Activated T-helper 2 cell treated with anti-CD3 and anti-CD28 coated beads, Interferon-gamma antibody, Interleukin-2, Interleukin-4, amounts not matched to agents 10 μg/mL and 5 μg/mL and 100 μg/mL, durations not matched to agents 14 hours and 24 hours and 36 hours (primary cell): ENCODE measurements at regions of chr10 and their contacts with region 1.

Region 1: GRCh38 chr10:77926566-77927401 is at the start of gene DLG5:
- DNase-seq: peak; percentile 25
- H3K4me3 Mint-ChIP-seq: peak within 1 kb of the TSS; percentile 73
- H3K27ac Mint-ChIP-seq: no peak within 1 kb of the TSS
- H3K4me1 Mint-ChIP-seq: peaks cover 10% of the 10 kb centered on the region
- H3K27me3 Mint-ChIP-seq: peaks cover 39% of the 10 kb centered on the region
- total RNA-seq, gene DLG5: 6.7 and 7.8 TPM in 2 replicates

Region 2: GRCh38 chr10:77846718-77847630 is 79.8 kb before region 1 on chr10:
- intact Hi-C with region 1: loop called (anchors 5 kb)
- DNase-seq: peak; percentile 45
- H3K4me3 Mint-ChIP-seq: no peak overlapping the region
- H3K27ac Mint-ChIP-seq: no peak overlapping the region
- H3K4me1 Mint-ChIP-seq: peaks cover 6% of the 10 kb centered on the region
- H3K27me3 Mint-ChIP-seq: no peaks in the 10 kb centered on the region

Region 3: GRCh38 chr10:77873536-77874380 is 53.0 kb before region 1 on chr10:
- intact Hi-C with region 1: loop called (anchors 10 kb)
- DNase-seq: peak; percentile 30
- H3K4me3 Mint-ChIP-seq: peak overlapping the region; percentile 8
- H3K27ac Mint-ChIP-seq: peak overlapping the region; percentile 77
- H3K4me1 Mint-ChIP-seq: peaks cover 17% of the 10 kb centered on the region
- H3K27me3 Mint-ChIP-seq: no peaks in the 10 kb centered on the region

Region 4: GRCh38 chr10:77965294-77965693 is 38.5 kb after region 1 on chr10:
- intact Hi-C with region 1: no loop called
- DNase-seq: no peak
- H3K4me3 Mint-ChIP-seq: no peak overlapping the region
- H3K27ac Mint-ChIP-seq: no peak overlapping the region
- H3K4me1 Mint-ChIP-seq: no peaks in the 10 kb centered on the region
- H3K27me3 Mint-ChIP-seq: no peaks in the 10 kb centered on the region